ENCODE measurements at regions of chr19 and their contacts with region 1.

Region 1: DNA sequence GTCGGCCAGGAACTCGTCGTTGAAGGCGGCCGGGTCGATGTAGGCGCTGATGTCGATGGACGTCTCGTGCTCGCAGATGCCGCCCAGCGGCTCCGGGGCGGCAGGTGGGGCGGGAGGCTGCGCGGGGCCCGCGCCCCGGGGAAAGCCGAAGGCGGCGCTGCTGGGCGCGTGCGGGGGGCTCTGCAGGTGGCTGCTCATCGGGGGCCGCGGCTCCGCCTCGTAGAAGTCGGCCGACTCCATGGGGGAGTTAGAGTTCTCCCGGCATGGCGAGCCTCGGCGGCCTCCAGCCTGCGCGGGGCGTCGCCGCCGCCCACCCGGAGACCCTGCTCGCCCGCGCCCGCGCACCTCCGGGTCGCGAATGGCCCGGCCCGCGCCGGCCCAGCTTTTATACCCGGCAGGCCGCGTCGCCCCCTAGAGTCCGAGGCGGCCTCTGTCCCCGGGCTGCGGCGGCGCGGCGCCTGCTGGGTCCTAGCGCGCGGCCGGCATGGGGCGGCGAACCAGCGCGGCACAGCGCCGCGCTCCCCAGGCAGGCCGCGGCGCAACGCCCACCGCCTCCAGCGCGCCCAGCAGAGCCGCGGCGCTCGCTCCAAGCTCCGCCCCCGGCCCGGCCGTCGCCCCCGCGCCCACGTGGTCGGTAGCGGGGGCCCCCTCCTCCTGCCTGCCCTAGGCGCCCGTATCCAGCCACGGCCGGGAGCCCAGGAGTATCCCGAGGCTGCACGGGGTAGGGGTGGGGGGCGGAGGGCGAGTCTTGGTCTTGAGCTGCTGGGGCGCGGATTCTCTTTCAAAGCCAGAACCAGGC is at the start of gene CEBPA:
- DNase-seq: peak; percentile 78
- ATAC-seq: peak; percentile 95
- H3K4me3 Mint-ChIP-seq: peak within 1 kb of the TSS; percentile 45
- H3K27ac Mint-ChIP-seq: no peak within 1 kb of the TSS
- H3K4me1 Mint-ChIP-seq: no peaks in the 10 kb centered on the region
- H3K27me3 Mint-ChIP-seq: peaks cover 33% of the 10 kb centered on the region
- total RNA-seq, gene CEBPA: 0.11 TPM in 1 of 2 experiments, not detected in the other

Region 2: GRCh38 chr19:33245948-33246708 is 56.2 kb before region 1 on chr19:
- CTCF ChIA-PET with region 1: interaction called, 3 read pairs
- POLR2A ChIA-PET with region 1: no interaction called
- intact Hi-C with region 1: loop called in 1 of 2 experiments (anchors 5 kb)
- DNase-seq: peak; percentile 43
- ATAC-seq: no peak
- H3K4me3 Mint-ChIP-seq: no peak overlapping the region
- H3K27ac Mint-ChIP-seq: no peak overlapping the region
- H3K4me1 Mint-ChIP-seq: no peaks in the 10 kb centered on the region
- H3K27me3 Mint-ChIP-seq: no peaks in the 10 kb centered on the region

Region 3: DNA sequence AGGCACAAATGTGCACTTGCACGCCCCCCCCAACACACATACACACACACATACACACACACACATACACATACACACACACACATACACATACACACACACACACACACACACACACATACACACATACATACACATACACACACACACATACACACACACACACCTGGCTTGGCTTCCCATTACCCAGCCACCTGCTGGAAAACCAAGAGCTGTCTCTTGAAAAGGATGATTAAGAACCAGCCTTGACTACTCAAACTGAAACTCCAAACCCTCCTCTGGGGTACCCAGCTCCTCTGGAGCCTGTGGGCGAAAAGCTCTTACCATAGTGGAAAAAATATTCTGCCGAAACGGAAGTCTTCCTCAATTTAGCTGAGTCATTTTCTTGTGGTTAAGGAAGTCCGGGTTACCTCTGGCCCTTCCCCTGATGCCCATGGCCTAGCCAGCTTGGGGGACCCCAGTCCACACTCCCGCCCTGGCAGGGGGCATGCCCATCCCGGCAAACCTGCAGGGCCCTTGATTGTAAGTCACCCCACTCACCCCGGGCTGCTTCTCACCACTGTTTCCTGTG is 21.9 kb before region 1 on chr19:
- CTCF ChIA-PET with region 1: interaction called, 4 read pairs
- POLR2A ChIA-PET with region 1: no interaction called
- intact Hi-C with region 1: loop called (anchors 1 to 2 kb)
- DNase-seq: peak; percentile 73
- ATAC-seq: peak; percentile 96
- H3K4me3 Mint-ChIP-seq: no peak overlapping the region
- H3K27ac Mint-ChIP-seq: peak overlapping the region; percentile 51
- H3K4me1 Mint-ChIP-seq: peaks cover 12% of the 10 kb centered on the region
- H3K27me3 Mint-ChIP-seq: peaks cover 14% of the 10 kb centered on the region

Region 4: GRCh38 chr19:33406521-33407139 is 104.3 kb after region 1 on chr19:
- CTCF ChIA-PET with region 1: interaction called, 3 read pairs
- POLR2A ChIA-PET with region 1: no interaction called
- intact Hi-C with region 1: loop called in 1 of 2 experiments (anchors 5 kb)
- DNase-seq: peak; percentile 85
- ATAC-seq: peak; percentile 85
- H3K4me3 Mint-ChIP-seq: no peak overlapping the region
- H3K27ac Mint-ChIP-seq: no peak overlapping the region
- H3K4me1 Mint-ChIP-seq: no peaks in the 10 kb centered on the region
- H3K27me3 Mint-ChIP-seq: no peaks in the 10 kb centered on the region

Region 5: GRCh38 chr19:33521480-33522370 is 219.4 kb after region 1 on chr19 and contains the start of gene PEPD:
- CTCF ChIA-PET with region 1: no interaction called
- POLR2A ChIA-PET with region 1: no interaction called
- intact Hi-C with region 1: loop called in 1 of 2 experiments (anchors 1 kb)
- DNase-seq: peak; percentile 95
- ATAC-seq: peak; percentile 97
- H3K4me3 Mint-ChIP-seq: peak within 1 kb of the TSS; percentile 89
- H3K27ac Mint-ChIP-seq: peak within 1 kb of the TSS; percentile 60
- H3K4me1 Mint-ChIP-seq: peaks cover 20% of the 10 kb centered on the region
- H3K27me3 Mint-ChIP-seq: no peaks in the 10 kb centered on the region
- total RNA-seq, gene PEPD: 26.9 to 37.4 TPM